Heart right ventricle (tissue), 16 donors: ENCODE measurements at regions of chr3 and their contacts with region 1.

Region 1: DNA sequence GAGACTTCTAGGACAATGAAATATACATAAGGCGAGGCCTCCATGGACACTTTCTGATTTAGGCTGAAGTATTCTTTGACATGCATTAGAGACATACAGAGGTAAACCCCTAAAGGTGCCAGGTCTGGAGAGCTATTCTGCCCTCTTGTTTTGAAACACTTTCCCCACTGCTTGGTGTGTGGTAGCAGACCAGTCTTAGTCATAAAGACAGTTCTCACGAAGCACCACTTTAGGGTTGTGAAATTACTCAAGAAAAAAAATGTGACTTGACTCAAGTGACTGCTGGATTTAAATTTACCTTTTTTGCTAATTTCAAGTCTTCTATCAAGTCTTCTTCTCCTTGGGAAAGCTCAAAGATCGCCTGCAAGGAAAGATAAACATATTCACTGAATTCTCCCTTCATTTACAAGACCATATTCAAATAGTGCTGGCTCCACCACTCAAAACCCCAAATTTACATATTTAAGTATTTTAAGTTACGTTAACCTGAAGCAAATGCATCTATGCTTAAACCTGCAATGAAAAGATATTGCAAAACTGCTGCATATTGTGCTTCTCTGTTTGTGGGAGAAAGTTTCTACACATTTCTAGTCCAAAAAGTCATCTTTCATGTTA is 48.4 kb downstream of the ARHGEF3 start:
- DNase-seq: no peak
- ATAC-seq: no peak
- H3K4me3 ChIP-seq: peak overlapping the region in 1 of 10 donors; percentile 48
- H3K27ac ChIP-seq: peak overlapping the region in 2 of 10 donors; percentile 77 to 91
- H3K4me1 ChIP-seq: peaks cover 9 to 78% (median 31%) of the 10 kb centered on the region in 9 donors
- H3K27me3 ChIP-seq: no peaks in the 10 kb centered on the region
- CTCF ChIP-seq: no peak

Region 2: DNA sequence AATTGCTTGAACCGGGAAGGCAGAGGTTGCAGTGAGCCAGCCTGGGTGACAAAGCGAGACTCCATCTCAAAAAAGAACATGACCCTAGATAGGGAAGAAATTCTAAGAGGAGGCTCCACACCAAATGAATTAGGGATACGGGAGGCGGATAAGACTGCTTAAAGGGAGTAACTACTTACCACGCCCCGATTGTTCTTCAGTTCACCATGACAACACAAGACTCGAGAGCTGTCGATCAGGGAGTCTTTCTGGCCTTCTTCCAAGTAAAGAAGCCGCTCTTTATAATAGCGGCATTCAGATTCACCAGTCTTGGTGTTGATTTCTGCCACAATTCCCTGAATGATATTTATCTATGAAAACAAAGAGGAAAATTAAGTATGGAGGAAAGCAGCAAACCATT is 16.3 kb before region 1 on chr3:
- intact Hi-C with region 1: loop called in 1 of 10 experiments (anchors 1 kb)
- DNase-seq: no peak
- ATAC-seq: no peak
- H3K4me3 ChIP-seq: no peak overlapping the region
- H3K27ac ChIP-seq: no peak overlapping the region
- H3K4me1 ChIP-seq: no peaks in the 10 kb centered on the region
- H3K27me3 ChIP-seq: no peaks in the 10 kb centered on the region
- CTCF ChIP-seq: no peak

Region 3: GRCh38 chr3:56783644-56784447 is 30.5 kb after region 1 on chr3:
- intact Hi-C with region 1: loop called in 1 of 10 experiments (anchors 5 kb)
- DNase-seq: peak in 1 of 2 donors; percentile 52
- ATAC-seq: peak; percentile 66 to 84 (median 74)
- H3K4me3 ChIP-seq: peak overlapping the region in 2 of 10 donors; percentile 2 to 12
- H3K27ac ChIP-seq: peak overlapping the region; percentile 14 to 87 (median 68)
- H3K4me1 ChIP-seq: peaks cover 12 to 99% (median 76%) of the 10 kb centered on the region in 9 donors
- H3K27me3 ChIP-seq: no peaks in the 10 kb centered on the region
- CTCF ChIP-seq: no peak